HEK293 (cell line): ENCODE measurements at regions of chr1 and their contacts with region 1.

Region 1: DNA sequence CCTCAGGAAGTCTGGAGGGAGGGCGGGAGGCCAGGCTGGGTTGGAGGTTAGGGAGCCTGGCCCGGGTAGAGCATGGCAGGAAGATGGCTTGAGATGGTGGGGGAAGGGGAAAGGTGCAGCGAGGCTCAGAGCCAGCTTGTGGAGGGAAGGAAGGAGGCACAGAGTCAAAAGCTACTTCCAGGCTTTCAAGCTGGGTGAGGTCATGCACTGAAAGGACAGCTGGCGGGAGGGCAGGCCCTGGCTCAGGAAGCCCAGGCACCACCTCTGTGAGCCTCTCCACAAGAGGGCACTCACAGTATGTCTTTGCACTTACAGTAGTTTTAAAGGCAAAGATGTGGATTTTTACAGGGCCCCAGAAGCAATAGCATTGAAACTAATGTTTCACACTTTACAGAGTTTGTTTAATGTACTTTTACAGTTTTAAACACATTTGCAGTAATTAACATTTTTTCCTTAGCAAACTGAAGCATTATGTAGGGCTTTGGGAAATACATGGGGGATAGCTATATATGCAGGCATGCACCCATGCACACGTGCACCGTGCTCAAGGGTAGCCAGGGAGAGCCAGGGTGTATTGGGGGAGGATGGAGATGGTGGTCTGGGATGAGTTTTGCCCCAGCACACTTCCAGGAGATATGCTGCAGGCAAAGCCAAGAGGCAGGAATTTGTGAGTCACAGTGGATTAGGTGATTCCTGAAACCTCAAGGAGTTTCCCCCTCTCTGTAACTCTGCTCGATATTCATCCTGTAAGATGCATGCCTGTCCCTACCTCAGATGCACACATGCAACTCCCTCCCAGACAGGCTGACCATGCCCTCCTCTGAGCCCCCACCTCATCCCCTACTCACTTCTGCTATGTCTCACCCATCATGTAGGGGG is 6.1 kb upstream of the ADAM15 start:
- H3K4me3 ChIP-seq: no peak overlapping the region
- H3K27ac ChIP-seq: no peak overlapping the region
- H3K4me1 ChIP-seq: peaks cover 6% of the 10 kb centered on the region
- CTCF ChIP-seq: peak; percentile 72

Region 2: GRCh38 chr1:155017041-155017945 is 27.8 kb before region 1 on chr1:
- CTCF ChIA-PET with region 1: interaction called, 38 read pairs
- POLR2A ChIA-PET with region 1: no interaction called
- H3K4me3 ChIP-seq: peak overlapping the region; percentile 31
- H3K27ac ChIP-seq: peak overlapping the region; percentile 48
- H3K4me1 ChIP-seq: peaks cover 7% of the 10 kb centered on the region
- CTCF ChIP-seq: peak; percentile 100

Region 3: GRCh38 chr1:155022927-155023236 is 22.2 kb before region 1 on chr1:
- CTCF ChIA-PET with region 1: interaction called, 38 read pairs
- POLR2A ChIA-PET with region 1: no interaction called
- H3K4me3 ChIP-seq: no peak overlapping the region
- H3K27ac ChIP-seq: no peak overlapping the region
- H3K4me1 ChIP-seq: no peaks in the 10 kb centered on the region
- CTCF ChIP-seq: no peak

Region 4: GRCh38 chr1:155063550-155064110 is 18.6 kb after region 1 on chr1 and contains the start of gene EFNA4:
- CTCF ChIA-PET with region 1: interaction called, 94 read pairs
- POLR2A ChIA-PET with region 1: interaction called, 5 read pairs
- H3K4me3 ChIP-seq: peak within 1 kb of the TSS; percentile 88
- H3K27ac ChIP-seq: peak within 1 kb of the TSS; percentile 64; the same call in 1 of the 2 replicates
- H3K4me1 ChIP-seq: no peaks in the 10 kb centered on the region; the same call in none of the 2 replicates
- CTCF ChIP-seq: no peak

Region 5: DNA sequence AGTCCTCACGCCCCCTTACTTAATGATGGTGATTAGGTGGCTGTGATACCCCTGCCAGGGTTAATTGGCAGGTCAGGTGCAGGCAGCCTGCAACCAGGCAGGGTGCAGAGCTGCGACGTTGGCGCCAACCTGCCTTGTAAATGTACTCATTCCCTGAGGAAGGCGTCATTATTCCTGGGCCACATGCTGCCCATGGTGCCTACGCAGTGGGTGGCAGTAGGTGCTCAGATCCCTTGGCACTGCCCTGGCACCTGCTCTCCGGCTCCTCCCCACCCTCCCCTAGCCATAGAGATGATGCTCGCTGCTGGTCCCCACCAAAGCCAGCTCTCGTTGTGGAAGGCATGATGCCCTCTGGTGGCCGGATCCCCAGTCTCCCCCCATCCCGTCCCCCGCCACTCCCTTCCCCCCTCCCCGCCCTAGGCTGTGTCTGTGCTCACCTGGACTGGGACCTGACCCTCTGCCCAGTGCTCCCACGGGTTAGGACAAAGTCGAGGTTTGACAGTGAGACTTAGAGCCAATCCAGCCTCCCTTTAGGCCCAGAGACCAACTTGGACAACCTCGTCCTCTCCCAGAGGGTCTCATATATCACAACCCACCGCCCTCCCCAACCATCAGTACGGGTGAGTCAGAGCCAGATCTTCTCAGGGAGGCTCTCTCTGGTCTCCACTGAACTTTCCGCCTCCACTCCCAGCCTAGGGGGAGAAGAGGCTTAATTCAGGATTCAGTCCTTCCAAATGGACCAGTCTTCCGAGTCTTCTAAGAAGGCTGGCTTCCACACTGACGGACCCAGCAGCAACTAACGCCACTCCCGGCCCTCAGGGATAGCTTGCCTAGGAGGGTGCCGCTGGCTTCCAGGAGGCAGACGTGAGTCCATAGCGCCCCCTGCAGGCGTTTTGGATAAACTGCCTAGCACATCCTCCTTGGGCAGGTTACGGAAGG is 122.4 kb after region 1 on chr1:
- CTCF ChIA-PET with region 1: interaction called, 14 read pairs
- POLR2A ChIA-PET with region 1: no interaction called
- H3K4me3 ChIP-seq: peak overlapping the region; percentile 35
- H3K27ac ChIP-seq: no peak overlapping the region; the same call in 1 of the 2 replicates
- H3K4me1 ChIP-seq: no peaks in the 10 kb centered on the region; the same call in 1 of the 2 replicates
- CTCF ChIP-seq: peak; percentile 92